BJ (cell line): ENCODE measurements at regions of chr7 and their contacts with region 1.

Region 1: GRCh38 chr7:139016931-139017511 is 18.8 kb downstream of the ZC3HAV1L start:
- DNase-seq: no peak
- H3K4me3 ChIP-seq: no peak overlapping the region
- H3K27me3 ChIP-seq: no peaks in the 10 kb centered on the region
- CTCF ChIP-seq: peak; percentile 76

Region 2: GRCh38 chr7:138886501-138886917 is 130.5 kb before region 1 on chr7:
- CTCF ChIA-PET with region 1: interaction called, 10 read pairs
- POLR2A ChIA-PET with region 1: no interaction called
- DNase-seq: no peak
- H3K4me3 ChIP-seq: no peak overlapping the region
- H3K27me3 ChIP-seq: no peaks in the 10 kb centered on the region
- CTCF ChIP-seq: peak; percentile 60

Region 3: DNA sequence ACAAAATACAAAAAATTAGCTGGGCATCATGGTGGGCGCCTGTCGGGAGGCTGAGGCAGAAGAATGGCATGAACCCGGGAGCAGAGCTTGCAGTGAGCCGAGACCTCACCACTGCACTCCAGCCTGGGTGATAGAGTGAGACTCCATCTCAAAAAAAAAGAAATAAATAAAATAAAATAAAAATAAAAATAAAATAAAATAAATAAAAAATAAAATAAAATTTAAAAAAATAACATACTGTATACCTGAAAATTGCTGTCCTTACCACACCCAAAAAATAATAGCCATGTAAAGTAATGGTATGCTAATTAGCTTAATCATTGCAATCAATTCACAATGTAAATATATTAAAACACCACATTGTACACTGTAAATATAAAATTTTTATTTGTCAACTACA is 15.5 kb after region 1 on chr7:
- CTCF ChIA-PET with region 1: interaction called, 12 read pairs
- POLR2A ChIA-PET with region 1: no interaction called
- DNase-seq: no peak
- H3K4me3 ChIP-seq: no peak overlapping the region
- H3K27me3 ChIP-seq: no peaks in the 10 kb centered on the region
- CTCF ChIP-seq: no peak